Colonic mucosa (tissue), 4 donors: ENCODE measurements at regions of chr1 and their contacts with region 1.

Region 1: DNA sequence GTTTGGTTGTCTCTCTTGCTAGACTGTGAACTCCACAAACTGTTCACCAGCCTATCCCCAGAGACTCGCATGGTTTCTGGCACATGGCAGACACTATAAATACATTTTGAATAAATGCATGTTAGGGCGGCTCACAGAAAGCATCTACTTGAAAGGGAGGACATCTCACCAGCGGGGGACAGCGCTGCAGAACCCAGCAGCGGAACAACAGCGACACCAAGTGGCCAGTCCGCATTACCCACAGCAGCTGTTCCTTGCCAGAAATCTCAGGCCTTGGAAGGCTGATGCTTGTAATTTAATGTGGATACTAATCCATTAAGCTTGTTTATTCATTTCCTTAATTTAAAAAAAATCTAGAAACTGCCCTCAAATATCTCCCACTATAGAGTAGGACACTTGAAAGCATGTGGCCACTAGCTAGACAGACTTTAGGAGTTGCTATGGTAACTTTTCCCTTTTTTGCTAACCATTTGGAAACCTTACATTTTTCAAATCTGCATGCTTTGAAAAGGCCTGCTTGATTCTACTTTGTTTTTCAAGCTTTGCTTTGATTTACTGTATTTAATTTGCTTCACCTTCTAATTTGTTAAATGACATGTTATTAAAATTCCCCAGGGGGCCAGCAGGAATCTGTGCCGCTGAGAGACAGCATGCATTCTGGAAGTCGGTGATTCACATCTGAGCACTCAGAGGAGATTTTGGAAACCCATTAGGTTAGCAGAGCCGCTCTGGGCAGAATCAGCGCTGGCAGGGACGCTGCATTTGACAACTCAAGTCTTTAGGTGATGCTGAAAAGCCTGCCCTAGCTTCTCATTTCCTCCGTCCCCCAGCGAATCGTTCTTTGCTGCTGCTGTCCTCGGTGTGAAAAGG is 63.5 kb upstream of the SSX2IP start:
- DNase-seq: peak; percentile 70
- H3K4me3 ChIP-seq: no peak overlapping the region
- H3K27ac ChIP-seq: no peak overlapping the region
- H3K4me1 ChIP-seq: no peaks in the 10 kb centered on the region
- H3K27me3 ChIP-seq: no peaks in the 10 kb centered on the region
- CTCF ChIP-seq: peak; percentile 98

Region 2: GRCh38 chr1:83931658-83932253 is 822.0 kb before region 1 on chr1:
- intact Hi-C with region 1: loop called (anchors 10 kb)
- DNase-seq: peak; percentile 33
- H3K4me3 ChIP-seq: no peak overlapping the region
- H3K27ac ChIP-seq: no peak overlapping the region
- H3K4me1 ChIP-seq: no peaks in the 10 kb centered on the region
- H3K27me3 ChIP-seq: no peaks in the 10 kb centered on the region
- CTCF ChIP-seq: peak; percentile 57

Region 3: DNA sequence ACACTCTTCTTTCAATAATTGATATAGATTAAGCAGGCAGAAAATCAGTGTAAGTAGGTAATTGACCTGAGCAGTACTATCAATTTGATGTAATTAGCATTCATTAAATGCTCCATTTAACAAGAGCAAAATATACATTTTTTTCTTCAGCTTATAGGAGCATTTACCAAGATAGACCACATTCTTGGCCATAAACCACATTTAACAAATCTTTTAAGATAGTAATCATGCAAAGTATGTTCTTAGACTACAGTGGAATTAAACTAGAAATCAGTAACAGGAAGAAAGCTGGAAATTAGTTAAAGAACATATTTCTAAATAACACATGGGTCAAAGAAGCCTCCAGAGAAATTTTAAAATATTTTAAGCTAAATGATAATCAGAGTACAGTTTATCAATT is 618.4 kb before region 1 on chr1:
- intact Hi-C with region 1: loop called (anchors 5 kb)
- DNase-seq: no peak
- H3K4me3 ChIP-seq: no peak overlapping the region
- H3K27ac ChIP-seq: no peak overlapping the region
- H3K4me1 ChIP-seq: no peaks in the 10 kb centered on the region
- H3K27me3 ChIP-seq: no peaks in the 10 kb centered on the region
- CTCF ChIP-seq: no peak

Region 4: GRCh38 chr1:84442256-84442655 is 311.5 kb before region 1 on chr1:
- intact Hi-C with region 1: loop called (anchors 5 kb)
- DNase-seq: no peak
- H3K4me3 ChIP-seq: no peak overlapping the region
- H3K27ac ChIP-seq: no peak overlapping the region
- H3K4me1 ChIP-seq: no peaks in the 10 kb centered on the region
- H3K27me3 ChIP-seq: no peaks in the 10 kb centered on the region
- CTCF ChIP-seq: peak; percentile 39

Region 5: GRCh38 chr1:84620720-84621313 is 132.9 kb before region 1 on chr1:
- intact Hi-C with region 1: loop called (anchors 5 kb)
- DNase-seq: peak; percentile 76
- H3K4me3 ChIP-seq: peak overlapping the region; percentile 50
- H3K27ac ChIP-seq: peak overlapping the region; percentile 7
- H3K4me1 ChIP-seq: no peaks in the 10 kb centered on the region
- H3K27me3 ChIP-seq: no peaks in the 10 kb centered on the region
- CTCF ChIP-seq: peak; percentile 97